Activated T-helper 1 cell treated with anti-CD3 and anti-CD28 coated beads, Interleukin-12 subunit alpha, Interleukin-12 subunit beta, Interleukin-2, Interleukin-4 antibody, amounts not matched to agents 30 ng/mL and 10 ng/mL and 1 ng/mL, durations not matched to agents 14 hours and 24 hours and 36 hours (primary cell): ENCODE measurements at regions of chr11 and their contacts with region 1.

Region 1: DNA sequence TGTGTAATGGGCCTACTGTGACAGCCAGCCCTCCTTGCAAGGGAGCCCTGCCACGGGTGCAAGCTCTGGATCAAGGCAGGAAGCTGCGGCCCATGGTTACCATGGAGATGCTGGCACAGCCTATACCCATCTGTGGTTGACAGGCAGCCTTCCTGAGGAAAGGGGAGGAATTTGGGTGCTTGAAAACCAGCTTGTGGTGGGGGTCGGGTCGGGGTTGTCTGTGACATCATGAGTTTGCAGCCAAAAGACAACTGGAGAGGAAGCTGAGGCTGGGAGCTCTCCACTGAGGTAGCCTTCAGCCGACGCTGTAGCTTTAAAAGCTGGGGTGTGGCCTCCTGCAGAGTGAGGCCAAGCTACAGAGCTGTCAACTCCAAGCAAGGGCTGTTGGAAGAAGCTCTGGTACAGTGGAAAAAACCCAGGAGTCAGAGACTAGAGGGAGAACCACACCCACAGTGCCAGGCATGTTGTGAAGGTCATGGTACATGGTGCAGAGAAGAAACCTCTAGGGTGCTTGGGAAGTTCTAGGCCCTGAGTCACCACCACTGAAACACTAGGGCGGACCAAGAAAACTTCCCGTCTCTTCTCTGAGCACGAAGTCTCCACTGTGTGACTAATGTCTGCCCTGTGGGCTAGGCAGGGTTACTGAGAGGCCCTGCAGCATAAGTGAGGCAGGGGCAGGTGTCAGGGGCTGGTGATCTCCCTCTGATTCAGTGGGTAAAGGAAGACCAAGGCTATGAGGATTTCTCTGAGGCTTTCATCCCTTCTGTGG is 10.8 kb upstream of the LDHA start:
- DNase-seq: peak; percentile 53
- H3K4me3 Mint-ChIP-seq: peak overlapping the region; percentile 59
- H3K27ac Mint-ChIP-seq: peak overlapping the region; percentile 99
- H3K4me1 Mint-ChIP-seq: peaks cover 38% of the 10 kb centered on the region
- H3K27me3 Mint-ChIP-seq: no peaks in the 10 kb centered on the region

Region 2: GRCh38 chr11:18105802-18106574 is 277.6 kb before region 1 on chr11 and contains the start of gene SAAL1:
- intact Hi-C with region 1: loop called (anchors 5 kb)
- DNase-seq: peak; percentile 86
- H3K4me3 Mint-ChIP-seq: peak within 1 kb of the TSS; percentile 94
- H3K27ac Mint-ChIP-seq: peak within 1 kb of the TSS; percentile 88
- H3K4me1 Mint-ChIP-seq: peaks cover 33% of the 10 kb centered on the region
- H3K27me3 Mint-ChIP-seq: peaks cover 3% of the 10 kb centered on the region
- total RNA-seq, gene SAAL1: 42.5 and 42.9 TPM in 2 replicates

Region 3: DNA sequence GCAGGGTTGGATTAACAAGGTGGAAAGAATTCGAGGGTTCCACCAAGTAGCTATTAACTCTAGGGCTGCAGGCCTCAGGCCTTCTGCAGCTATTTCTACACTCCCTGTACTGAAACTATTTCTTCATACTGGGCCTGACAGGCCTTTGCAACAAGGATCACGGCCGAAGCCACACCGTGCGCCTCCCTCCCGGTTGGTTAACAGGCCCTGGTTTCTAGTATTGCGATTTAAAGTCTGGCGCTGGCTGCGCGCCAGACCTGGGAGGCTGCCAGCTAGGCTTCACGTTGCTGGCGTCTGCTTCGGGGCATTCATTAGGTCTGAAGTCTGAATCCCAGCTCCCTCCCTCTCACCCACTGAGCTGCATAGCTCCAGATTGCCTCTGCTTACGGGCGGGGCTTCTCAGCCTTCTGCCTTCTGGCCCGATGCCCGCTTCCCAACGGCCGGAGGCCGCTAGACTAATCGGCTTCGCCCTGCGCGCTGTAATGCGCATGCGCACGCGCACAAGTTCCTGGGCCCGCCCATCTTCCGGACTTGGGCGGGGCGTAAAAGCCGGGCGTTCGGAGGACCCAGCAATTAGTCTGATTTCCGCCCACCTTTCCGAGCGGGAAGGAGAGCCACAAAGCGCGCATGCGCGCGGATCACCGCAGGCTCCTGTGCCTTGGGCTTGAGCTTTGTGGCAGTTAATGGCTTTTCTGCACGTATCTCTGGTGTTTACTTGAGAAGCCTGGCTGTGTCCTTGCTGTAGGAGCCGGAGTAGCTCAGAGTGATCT is 12.3 kb after region 1 on chr11:
- intact Hi-C with region 1: loop called (anchors 1 kb)
- DNase-seq: peak; percentile 96
- H3K4me3 Mint-ChIP-seq: peak overlapping the region; percentile 99
- H3K27ac Mint-ChIP-seq: peak overlapping the region; percentile 98
- H3K4me1 Mint-ChIP-seq: peaks cover 67% of the 10 kb centered on the region
- H3K27me3 Mint-ChIP-seq: no peaks in the 10 kb centered on the region

Region 4: DNA sequence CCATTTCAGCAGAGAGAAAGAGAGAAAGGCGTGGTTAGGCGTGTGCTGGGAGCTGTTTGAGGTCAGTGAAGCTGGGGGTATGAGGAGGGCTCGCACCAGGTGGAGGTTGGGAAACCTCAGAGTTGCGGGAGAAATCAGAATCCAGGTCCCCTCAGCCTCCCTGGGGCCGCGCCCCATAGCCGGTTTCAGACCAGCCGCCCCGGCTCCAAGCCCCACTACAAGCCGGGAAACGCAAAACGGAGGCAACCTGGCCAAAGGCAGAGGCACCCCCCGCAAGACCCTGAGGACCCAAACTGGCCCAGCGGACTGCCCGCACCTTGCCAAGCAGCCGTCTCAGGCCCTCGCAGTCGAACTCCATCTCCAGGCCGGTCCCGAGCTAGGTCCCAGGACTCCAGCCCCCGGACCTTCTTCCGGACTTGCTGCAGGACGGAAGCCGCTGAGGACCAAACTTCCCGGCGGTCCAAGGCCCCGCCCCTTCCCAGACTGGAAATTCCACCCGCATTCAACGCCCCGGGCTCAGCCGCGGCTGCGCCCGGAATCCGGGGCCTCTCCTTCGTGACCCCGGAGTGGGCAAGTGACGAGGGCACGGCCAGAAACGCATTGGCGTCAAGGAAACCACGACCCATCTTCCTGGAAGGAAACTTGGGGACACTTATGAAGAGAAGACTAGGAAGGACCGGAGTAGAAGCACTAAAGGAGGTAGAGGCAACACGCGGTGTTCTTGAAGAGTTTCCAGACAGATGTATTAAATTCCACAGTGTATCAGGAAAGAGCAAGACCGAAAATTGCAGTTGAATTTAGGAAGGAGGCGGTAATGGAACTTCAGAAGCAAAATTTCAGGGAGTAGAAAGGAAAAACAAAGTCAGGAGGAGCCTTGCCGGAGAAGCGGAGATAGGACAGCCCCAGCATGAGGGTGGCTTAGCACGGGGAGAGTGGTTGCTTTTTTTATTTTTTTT is 205.0 kb after region 1 on chr11 and contains the start of gene UEVLD:
- intact Hi-C with region 1: loop called (anchors 5 kb)
- DNase-seq: peak; percentile 68
- H3K4me3 Mint-ChIP-seq: no peak within 1 kb of the TSS
- H3K27ac Mint-ChIP-seq: no peak within 1 kb of the TSS
- H3K4me1 Mint-ChIP-seq: peaks cover 11% of the 10 kb centered on the region
- H3K27me3 Mint-ChIP-seq: no peaks in the 10 kb centered on the region
- total RNA-seq, gene UEVLD: 31.2 and 31.4 TPM in 2 replicates